ENCODE measurements at regions of chr12 and their contacts with region 1.

Region 1: DNA sequence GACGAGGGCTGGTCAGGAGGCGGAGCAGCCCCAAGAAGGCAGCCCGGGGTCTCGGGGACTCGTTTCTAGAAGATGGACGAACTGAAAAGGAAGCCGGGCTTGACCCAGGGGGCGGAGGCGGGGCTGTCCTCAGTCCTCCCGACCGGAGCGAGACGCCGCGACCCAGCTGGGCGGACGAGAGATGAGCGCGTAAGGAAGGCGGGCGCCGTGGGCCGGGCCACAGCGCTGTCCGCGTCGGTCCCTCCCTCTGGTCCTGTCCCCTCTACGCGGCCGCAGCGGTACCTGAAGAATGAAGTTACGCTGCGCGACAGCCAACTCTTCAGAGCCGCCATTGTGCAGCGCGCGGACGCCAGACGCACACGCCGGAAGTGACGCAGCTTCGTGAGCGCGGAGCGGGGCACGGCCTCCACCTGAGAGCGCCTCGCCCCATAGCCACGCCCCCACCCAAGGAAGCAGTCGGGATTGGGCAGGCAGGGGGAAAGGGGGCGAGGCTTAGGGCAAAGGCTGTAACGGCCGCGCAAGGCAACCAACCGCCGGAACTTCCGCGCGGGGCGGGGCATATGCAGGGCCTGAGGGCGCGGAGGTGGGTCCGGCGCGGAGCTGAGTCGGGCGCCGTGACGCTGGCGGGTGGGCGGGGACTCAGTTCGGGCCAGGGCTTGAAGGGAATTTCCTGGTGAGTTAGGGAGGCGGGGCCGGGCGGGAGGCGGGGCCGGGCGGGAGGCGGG is at the start of gene DIABLO:
- DNase-seq: peak; percentile 97 to 100 (median 100)
- ATAC-seq: peak; percentile 96
- H3K4me3 ChIP-seq: peak within 1 kb of the TSS; percentile 90
- H3K4me3 Mint-ChIP-seq: peak within 1 kb of the TSS; percentile 75 to 95 (median 90)
- H3K27ac ChIP-seq: peak within 1 kb of the TSS; percentile 99
- H3K27ac Mint-ChIP-seq: peak within 1 kb of the TSS; percentile 76 to 96 (median 93)
- H3K4me1 ChIP-seq: peaks cover 24 to 34% of the 10 kb centered on the region in 2 donors
- H3K4me1 Mint-ChIP-seq: peaks cover 23 to 53% (median 47%) of the 10 kb centered on the region in 7 donors
- H3K27me3 ChIP-seq: no peaks in the 10 kb centered on the region
- H3K27me3 Mint-ChIP-seq: no peaks in the 10 kb centered on the region
- total RNA-seq, gene DIABLO: 41.3 to 94.1 (median 50.1) TPM

Region 2: DNA sequence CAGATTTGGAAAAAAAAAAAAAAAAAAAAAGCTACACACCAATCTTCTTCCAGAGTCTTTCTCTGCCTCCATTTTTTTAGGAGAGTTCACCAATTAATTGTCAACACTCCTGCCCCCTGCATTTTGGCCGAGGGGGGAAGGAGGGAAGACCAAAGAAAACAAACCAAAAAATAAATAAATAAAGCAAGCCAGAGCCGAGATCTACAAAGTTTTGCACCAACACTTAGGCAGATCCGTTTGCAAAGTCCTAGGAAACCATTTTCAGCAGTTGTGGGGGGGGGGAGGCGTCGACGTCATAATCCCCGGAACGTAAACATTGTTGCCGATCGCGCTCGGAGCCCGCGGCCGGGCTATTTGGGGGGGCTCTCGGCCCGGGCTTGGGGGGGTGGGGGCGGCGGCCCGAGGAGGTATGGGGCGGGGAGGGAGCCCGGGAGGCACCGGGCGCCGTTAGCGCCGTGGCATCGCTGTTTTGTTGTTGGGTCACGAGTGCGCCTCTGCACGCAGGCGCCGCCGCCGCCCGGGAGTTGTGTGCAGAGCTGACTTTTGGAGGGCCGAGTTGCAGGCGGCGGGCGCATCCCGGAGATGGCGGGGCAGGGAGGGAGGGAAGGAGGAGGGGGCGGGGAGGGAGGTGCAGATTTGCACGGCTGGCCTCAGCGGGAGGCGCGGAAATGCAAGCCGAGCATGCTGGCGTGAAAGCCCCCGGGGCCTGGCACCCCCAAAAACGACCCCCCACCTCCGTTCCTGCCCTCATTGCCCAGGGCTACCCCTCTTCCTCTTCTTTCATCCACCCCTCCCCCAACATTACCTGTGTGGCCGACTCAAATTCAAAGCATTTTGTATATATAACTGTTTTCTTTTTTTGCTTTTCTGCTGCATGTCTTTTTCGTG is 645.6 kb before region 1 on chr12:
- CTCF ChIA-PET with region 1: no interaction called
- POLR2A ChIA-PET with region 1: no interaction called
- intact Hi-C with region 1: loop called in 1 of 2 experiments (anchors 5 kb)
- DNase-seq: peak; percentile 61 to 79 (median 74)
- ATAC-seq: peak; percentile 76
- H3K4me3 ChIP-seq: peak overlapping the region; percentile 75
- H3K4me3 Mint-ChIP-seq: peak overlapping the region; percentile 92 to 100 (median 98)
- H3K27ac ChIP-seq: peak overlapping the region; percentile 91
- H3K27ac Mint-ChIP-seq: peak overlapping the region; percentile 92 to 99 (median 99)
- H3K4me1 ChIP-seq: peaks cover 25 to 28% of the 10 kb centered on the region in 2 donors
- H3K4me1 Mint-ChIP-seq: peaks cover 24 to 58% (median 49%) of the 10 kb centered on the region in 7 donors
- H3K27me3 ChIP-seq: no peaks in the 10 kb centered on the region
- H3K27me3 Mint-ChIP-seq: no peaks in the 10 kb centered on the region

Region 3: GRCh38 chr12:121888478-121889266 is 337.2 kb before region 1 on chr12 and contains the start of gene PSMD9:
- CTCF ChIA-PET with region 1: no interaction called
- POLR2A ChIA-PET with region 1: interaction called, 3 read pairs
- intact Hi-C with region 1: loop called (anchors 1 to 10 kb)
- DNase-seq: peak; percentile 96 to 99 (median 98)
- ATAC-seq: peak; percentile 98
- H3K4me3 ChIP-seq: peak within 1 kb of the TSS; percentile 74
- H3K4me3 Mint-ChIP-seq: peak within 1 kb of the TSS; percentile 85 to 100 (median 98)
- H3K27ac ChIP-seq: peak within 1 kb of the TSS; percentile 98
- H3K27ac Mint-ChIP-seq: peak within 1 kb of the TSS; percentile 92 to 100 (median 99)
- H3K4me1 ChIP-seq: peaks cover 19 to 21% of the 10 kb centered on the region in 2 donors
- H3K4me1 Mint-ChIP-seq: peaks cover 18 to 50% (median 40%) of the 10 kb centered on the region in 7 donors
- H3K27me3 ChIP-seq: no peaks in the 10 kb centered on the region
- H3K27me3 Mint-ChIP-seq: peaks cover 0 to 4% (median 0%) of the 10 kb centered on the region in 5 donors
- total RNA-seq, gene PSMD9: 36.7 to 55.2 (median 46.9) TPM

Region 4: GRCh38 chr12:122197612-122197966 is 28.3 kb before region 1 on chr12:
- CTCF ChIA-PET with region 1: no interaction called
- POLR2A ChIA-PET with region 1: no interaction called
- intact Hi-C with region 1: no loop called
- DNase-seq: no peak
- ATAC-seq: no peak
- H3K4me3 ChIP-seq: no peak overlapping the region
- H3K4me3 Mint-ChIP-seq: peak overlapping the region in 1 of 10 donors; percentile 26
- H3K27ac ChIP-seq: no peak overlapping the region
- H3K27ac Mint-ChIP-seq: peak overlapping the region in 1 of 9 donors; percentile 56
- H3K4me1 ChIP-seq: peaks cover 2 to 3% of the 10 kb centered on the region in 2 donors
- H3K4me1 Mint-ChIP-seq: peaks cover 0 to 5% (median 2%) of the 10 kb centered on the region in 7 donors
- H3K27me3 ChIP-seq: peaks cover 0 to 3% of the 10 kb centered on the region in 2 donors
- H3K27me3 Mint-ChIP-seq: peaks cover 0 to 37% (median 12%) of the 10 kb centered on the region in 5 donors

Region 5: DNA sequence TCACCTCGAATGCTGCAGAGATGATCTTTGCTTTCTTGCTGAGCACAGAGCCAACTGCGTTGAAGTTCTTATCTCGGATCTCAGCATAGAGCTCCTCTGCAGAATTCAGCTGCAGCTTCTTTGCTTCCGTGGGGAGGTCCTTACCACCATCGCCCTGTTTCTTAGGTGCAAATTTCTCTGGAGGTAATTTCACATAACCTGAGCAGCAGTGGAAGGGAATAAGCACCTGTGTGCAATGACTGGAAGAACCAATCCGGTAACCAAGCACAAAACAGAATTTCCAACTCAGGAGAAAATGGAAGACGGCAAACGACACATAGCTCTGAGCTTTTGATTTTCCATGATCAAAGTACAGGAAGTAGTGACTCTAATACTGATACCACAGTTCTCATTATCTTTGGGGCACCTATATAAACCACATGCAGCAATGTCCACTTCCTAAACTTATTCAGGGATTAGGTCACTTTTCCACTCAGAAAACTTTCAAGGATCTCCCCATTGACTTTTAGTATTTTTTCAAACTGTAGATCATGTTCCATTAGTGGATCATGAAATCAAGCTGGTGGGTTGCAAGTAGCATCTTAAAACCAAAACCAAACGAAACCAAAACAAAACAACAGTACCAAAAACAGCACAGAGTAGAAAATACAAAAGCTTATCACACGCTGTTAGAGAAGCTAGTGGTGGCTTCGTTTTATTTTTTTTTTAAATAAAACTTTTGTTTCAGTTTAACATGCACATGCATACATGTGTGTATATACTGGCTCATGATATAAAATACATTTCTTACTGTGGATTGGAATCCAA is 18.9 kb after region 1 on chr12:
- CTCF ChIA-PET with region 1: interaction called, 3 read pairs
- POLR2A ChIA-PET with region 1: interaction called, 29 read pairs
- intact Hi-C with region 1: loop called (anchors 1 kb)
- DNase-seq: peak in 7 of 9 donors; percentile 18 to 59 (median 43)
- ATAC-seq: peak; percentile 80
- H3K4me3 ChIP-seq: peak overlapping the region; percentile 50
- H3K4me3 Mint-ChIP-seq: peak overlapping the region; percentile 76 to 87 (median 82)
- H3K27ac ChIP-seq: peak overlapping the region; percentile 58
- H3K27ac Mint-ChIP-seq: peak overlapping the region; percentile 71 to 94 (median 90)
- H3K4me1 ChIP-seq: peaks cover 19 to 26% of the 10 kb centered on the region in 2 donors
- H3K4me1 Mint-ChIP-seq: peaks cover 8 to 31% (median 27%) of the 10 kb centered on the region in 7 donors
- H3K27me3 ChIP-seq: no peaks in the 10 kb centered on the region
- H3K27me3 Mint-ChIP-seq: no peaks in the 10 kb centered on the region

Region 6: GRCh38 chr12:122452701-122453285 is 226.9 kb after region 1 on chr12:
- CTCF ChIA-PET with region 1: interaction called, 3 read pairs
- POLR2A ChIA-PET with region 1: no interaction called
- intact Hi-C with region 1: loop called in 1 of 2 experiments (anchors 1 kb)
- DNase-seq: no peak
- ATAC-seq: no peak
- H3K4me3 ChIP-seq: peak overlapping the region; percentile 36
- H3K4me3 Mint-ChIP-seq: peak overlapping the region; percentile 64 to 87 (median 81)
- H3K27ac ChIP-seq: peak overlapping the region; percentile 63
- H3K27ac Mint-ChIP-seq: peak overlapping the region; percentile 91 to 99 (median 98)
- H3K4me1 ChIP-seq: peaks cover 22 to 24% of the 10 kb centered on the region in 2 donors
- H3K4me1 Mint-ChIP-seq: peaks cover 22 to 41% (median 33%) of the 10 kb centered on the region in 7 donors
- H3K27me3 ChIP-seq: no peaks in the 10 kb centered on the region
- H3K27me3 Mint-ChIP-seq: no peaks in the 10 kb centered on the region

Region 7: GRCh38 chr12:122974274-122974891 is 748.5 kb after region 1 on chr12:
- CTCF ChIA-PET with region 1: no interaction called
- POLR2A ChIA-PET with region 1: no interaction called
- intact Hi-C with region 1: loop called (anchors 2 to 10 kb)
- DNase-seq: peak; percentile 92 to 98 (median 98)
- ATAC-seq: peak; percentile 92
- H3K4me3 ChIP-seq: peak overlapping the region; percentile 100
- H3K4me3 Mint-ChIP-seq: peak overlapping the region; percentile 92 to 99 (median 97)
- H3K27ac ChIP-seq: peak overlapping the region; percentile 98
- H3K27ac Mint-ChIP-seq: peak overlapping the region; percentile 99 to 100 (median 99)
- H3K4me1 ChIP-seq: peaks cover 18 to 23% of the 10 kb centered on the region in 2 donors
- H3K4me1 Mint-ChIP-seq: peaks cover 17 to 39% (median 30%) of the 10 kb centered on the region in 7 donors
- H3K27me3 ChIP-seq: no peaks in the 10 kb centered on the region
- H3K27me3 Mint-ChIP-seq: peaks cover 0 to 3% (median 0%) of the 10 kb centered on the region in 5 donors

Measured in naive thymus-derived CD4-positive, alpha-beta T cell (primary cell).